Cardiac septum (tissue), 1 donor: ENCODE measurements at regions of chr6 and their contacts with region 1.

Region 1: GRCh38 chr6:35202066-35202546 is 11.7 kb upstream of the SCUBE3 start:
- DNase-seq: no peak

Region 2: GRCh38 chr6:34986845-34987246 is 215.3 kb before region 1 on chr6:
- intact Hi-C with region 1: loop called (anchors 10 kb)
- DNase-seq: no peak

Region 3: DNA sequence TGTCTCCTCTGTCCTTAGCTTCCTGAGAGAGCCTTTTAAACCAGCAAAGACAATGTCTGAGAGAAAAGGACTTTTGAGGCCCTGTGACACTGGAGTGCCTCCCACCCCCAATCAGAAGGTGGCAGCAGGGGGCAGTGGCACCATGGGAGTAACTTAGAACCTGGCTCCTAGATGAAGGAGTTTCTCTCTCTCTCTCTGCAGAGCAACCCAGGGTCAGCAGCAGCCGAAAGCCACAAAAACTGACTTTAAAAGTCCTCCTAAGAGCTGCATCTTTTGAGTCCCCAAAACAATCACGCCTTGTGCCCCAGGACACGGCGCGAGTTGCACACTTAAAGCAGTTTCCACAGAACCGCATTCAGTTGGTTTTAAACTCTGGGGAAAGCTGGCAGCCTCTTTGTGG is 55.7 kb before region 1 on chr6:
- intact Hi-C with region 1: loop called (anchors 2 kb)
- DNase-seq: no peak